ENCODE measurements at regions of chr15 and their contacts with region 1.

Region 1: DNA sequence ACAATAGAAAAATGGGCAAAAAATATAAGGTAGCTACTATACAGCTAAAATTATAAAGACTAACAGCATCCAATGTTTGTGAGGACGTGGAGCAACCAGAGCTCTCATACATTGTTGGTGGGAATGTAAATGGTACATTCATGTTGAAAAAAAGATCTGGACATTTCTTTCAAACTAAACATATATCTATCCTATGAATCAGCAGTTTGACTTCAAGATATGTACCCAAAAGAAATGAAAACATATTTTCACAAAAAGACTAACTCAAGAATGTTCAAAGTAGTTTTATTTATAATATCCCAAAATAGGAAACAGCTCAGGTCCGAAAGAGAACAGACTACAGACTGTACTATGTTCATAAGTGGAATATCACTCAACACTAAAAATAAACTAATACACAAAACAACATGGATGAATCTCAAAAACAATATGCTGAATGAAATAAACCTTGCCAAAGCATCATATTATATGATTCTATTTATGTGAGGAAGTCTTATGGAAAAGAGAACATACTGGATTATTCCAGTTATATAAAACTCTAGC is 8.8 kb upstream of the TTBK2 start:
- DNase-seq: no peak
- H3K4me3 ChIP-seq: no peak overlapping the region
- H3K27ac ChIP-seq: no peak overlapping the region
- H3K4me1 ChIP-seq: no peaks in the 10 kb centered on the region
- H3K27me3 ChIP-seq: no peaks in the 10 kb centered on the region
- CTCF ChIP-seq: no peak
- EP300 ChIP-seq: no peak
- POLR2A ChIP-seq: no peak

Region 2: GRCh38 chr15:42808913-42809312 is 120.5 kb before region 1 on chr15:
- intact Hi-C with region 1: loop called (anchors 5 kb)
- DNase-seq: no peak
- H3K4me3 ChIP-seq: no peak overlapping the region
- H3K27ac ChIP-seq: no peak overlapping the region
- H3K4me1 ChIP-seq: no peaks in the 10 kb centered on the region
- H3K27me3 ChIP-seq: no peaks in the 10 kb centered on the region
- CTCF ChIP-seq: no peak
- EP300 ChIP-seq: no peak
- POLR2A ChIP-seq: no peak

Region 3: GRCh38 chr15:42845581-42845980 is 83.8 kb before region 1 on chr15:
- intact Hi-C with region 1: no loop called
- DNase-seq: no peak
- H3K4me3 ChIP-seq: no peak overlapping the region
- H3K27ac ChIP-seq: no peak overlapping the region
- H3K4me1 ChIP-seq: no peaks in the 10 kb centered on the region
- H3K27me3 ChIP-seq: no peaks in the 10 kb centered on the region
- CTCF ChIP-seq: no peak
- EP300 ChIP-seq: no peak
- POLR2A ChIP-seq: no peak